Heart left ventricle (tissue), 16 donors: ENCODE measurements at regions of chr5 and their contacts with region 1.

Region 1: GRCh38 chr5:5492087-5492933 is 69.8 kb downstream of the ICE1 start:
- DNase-seq: no peak
- ATAC-seq: peak in 3 of 4 donors; percentile 49 to 62 (median 57)
- H3K4me3 ChIP-seq: no peak overlapping the region
- H3K27ac ChIP-seq: no peak overlapping the region
- H3K4me1 ChIP-seq: peaks cover 0 to 31% (median 8%) of the 10 kb centered on the region in 12 donors
- H3K27me3 ChIP-seq: peaks cover 0 to 7% (median 0%) of the 10 kb centered on the region in 9 donors
- CTCF ChIP-seq: peak; percentile 55 to 78 (median 62)
- POLR2A ChIP-seq: no peak

Region 2: DNA sequence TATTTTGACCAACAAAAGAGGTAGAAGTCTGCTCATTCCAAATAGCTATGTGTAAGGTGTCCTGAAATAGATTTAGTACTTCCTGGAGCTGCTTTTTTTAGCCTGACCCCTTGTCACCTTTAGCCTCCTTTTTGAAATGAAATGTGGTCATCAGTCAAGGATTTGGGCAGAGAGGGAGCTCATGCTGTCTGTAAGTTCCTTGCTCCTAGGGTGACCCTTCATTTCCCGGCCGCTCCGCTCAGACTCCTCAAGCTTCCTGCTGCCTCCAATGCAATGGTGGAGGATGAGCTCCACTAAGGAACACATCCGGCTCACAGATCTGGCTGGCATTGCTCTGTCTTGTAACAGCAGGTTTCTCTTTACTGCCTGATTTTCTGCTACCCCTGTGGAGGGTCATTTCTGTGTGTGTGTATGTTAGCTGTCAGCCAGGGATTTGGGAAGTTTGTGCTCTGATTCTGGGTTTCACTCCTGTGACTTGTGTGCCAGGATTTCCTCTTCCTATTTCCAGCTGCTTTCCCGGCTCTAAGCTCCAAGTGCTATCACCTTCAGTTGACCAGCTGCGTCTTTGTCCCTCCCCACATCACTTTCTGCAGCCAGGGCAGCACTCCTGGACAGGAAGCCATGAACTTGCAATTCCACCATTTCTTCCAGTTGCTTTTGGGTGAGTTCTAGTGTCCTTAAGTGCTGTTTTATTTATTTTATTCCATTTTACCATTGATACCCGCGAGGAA is 196.0 kb after region 1 on chr5:
- intact Hi-C with region 1: loop called in 1 of 10 experiments (anchors 10 kb)
- DNase-seq: peak in 4 of 5 donors; percentile 25 to 50 (median 44)
- ATAC-seq: peak; percentile 78 to 87 (median 80)
- H3K4me3 ChIP-seq: peak overlapping the region in 5 of 12 donors; percentile 16 to 45 (median 28)
- H3K27ac ChIP-seq: peak overlapping the region in 9 of 12 donors; percentile 28 to 84 (median 45)
- H3K4me1 ChIP-seq: peaks cover 0 to 39% (median 7%) of the 10 kb centered on the region in 12 donors
- H3K27me3 ChIP-seq: no peaks in the 10 kb centered on the region
- CTCF ChIP-seq: no peak
- POLR2A ChIP-seq: no peak

Region 3: GRCh38 chr5:5881294-5881693 is 389.0 kb after region 1 on chr5:
- intact Hi-C with region 1: loop called in 9 of 10 experiments (anchors 2 to 5 kb)
- DNase-seq: peak in 1 of 5 donors; percentile 23
- ATAC-seq: peak in 2 of 4 donors; percentile 32 to 53
- H3K4me3 ChIP-seq: no peak overlapping the region
- H3K27ac ChIP-seq: no peak overlapping the region
- H3K4me1 ChIP-seq: no peaks in the 10 kb centered on the region
- H3K27me3 ChIP-seq: peaks cover 0 to 5% (median 0%) of the 10 kb centered on the region in 9 donors
- CTCF ChIP-seq: peak in 5 of 12 donors; percentile 11 to 43 (median 17)
- POLR2A ChIP-seq: no peak

Region 4: GRCh38 chr5:6279607-6280006 is 787.3 kb after region 1 on chr5:
- intact Hi-C with region 1: loop called in 1 of 10 experiments (anchors 10 kb)
- DNase-seq: no peak
- ATAC-seq: no peak
- H3K4me3 ChIP-seq: no peak overlapping the region
- H3K27ac ChIP-seq: no peak overlapping the region
- H3K4me1 ChIP-seq: no peaks in the 10 kb centered on the region
- H3K27me3 ChIP-seq: no peaks in the 10 kb centered on the region
- CTCF ChIP-seq: no peak
- POLR2A ChIP-seq: no peak

Region 5: DNA sequence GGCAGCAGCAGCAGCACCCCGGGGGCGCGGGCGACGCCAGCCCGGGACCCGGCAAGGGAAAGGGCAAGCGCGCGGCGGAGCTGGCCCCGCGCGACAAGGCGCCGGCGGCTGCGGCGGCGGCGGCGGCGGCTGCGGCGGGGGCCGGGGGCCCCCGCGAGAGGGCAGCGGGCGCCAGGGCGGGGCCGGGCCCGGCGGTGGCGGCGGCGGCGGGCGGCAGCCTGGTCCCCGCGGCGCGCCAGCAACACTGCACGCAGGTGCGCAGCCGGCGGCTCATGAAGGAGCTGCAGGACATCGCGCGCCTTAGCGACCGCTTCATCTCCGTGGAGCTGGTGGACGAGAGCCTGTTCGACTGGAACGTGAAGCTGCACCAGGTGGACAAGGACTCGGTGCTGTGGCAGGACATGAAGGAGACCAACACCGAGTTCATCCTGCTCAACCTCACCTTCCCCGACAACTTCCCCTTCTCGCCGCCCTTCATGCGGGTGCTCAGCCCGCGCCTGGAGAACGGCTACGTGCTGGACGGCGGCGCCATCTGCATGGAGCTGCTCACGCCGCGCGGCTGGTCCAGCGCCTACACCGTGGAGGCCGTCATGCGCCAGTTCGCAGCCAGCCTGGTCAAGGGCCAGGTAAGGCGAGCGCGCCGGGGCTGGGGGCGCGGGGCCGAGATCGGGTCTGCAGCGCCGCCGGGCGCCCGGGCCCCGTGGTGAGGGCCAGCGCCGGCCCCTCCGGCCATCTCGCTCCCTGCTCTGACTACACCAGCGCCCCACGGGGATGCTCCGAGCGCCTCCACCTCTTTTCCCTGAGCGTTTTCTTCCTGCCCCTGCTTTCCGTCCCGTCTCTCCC is 956.5 kb after region 1 on chr5 and contains the start of gene UBE2QL1:
- intact Hi-C with region 1: loop called in 1 of 10 experiments (anchors 10 kb)
- DNase-seq: peak in 1 of 5 donors; percentile 40
- ATAC-seq: peak in 3 of 4 donors; percentile 52 to 63 (median 62)
- H3K4me3 ChIP-seq: peak within 1 kb of the TSS; percentile 39 to 76 (median 62)
- H3K27ac ChIP-seq: peak within 1 kb of the TSS in 11 of 12 donors; percentile 37 to 96 (median 80)
- H3K4me1 ChIP-seq: peaks cover 0 to 25% (median 10%) of the 10 kb centered on the region in 12 donors
- H3K27me3 ChIP-seq: peaks cover 0 to 40% (median 6%) of the 10 kb centered on the region in 9 donors
- CTCF ChIP-seq: no peak
- POLR2A ChIP-seq: no peak
- total RNA-seq, gene UBE2QL1: 9.8 to 32.0 (median 21.0) TPM

Region 6: DNA sequence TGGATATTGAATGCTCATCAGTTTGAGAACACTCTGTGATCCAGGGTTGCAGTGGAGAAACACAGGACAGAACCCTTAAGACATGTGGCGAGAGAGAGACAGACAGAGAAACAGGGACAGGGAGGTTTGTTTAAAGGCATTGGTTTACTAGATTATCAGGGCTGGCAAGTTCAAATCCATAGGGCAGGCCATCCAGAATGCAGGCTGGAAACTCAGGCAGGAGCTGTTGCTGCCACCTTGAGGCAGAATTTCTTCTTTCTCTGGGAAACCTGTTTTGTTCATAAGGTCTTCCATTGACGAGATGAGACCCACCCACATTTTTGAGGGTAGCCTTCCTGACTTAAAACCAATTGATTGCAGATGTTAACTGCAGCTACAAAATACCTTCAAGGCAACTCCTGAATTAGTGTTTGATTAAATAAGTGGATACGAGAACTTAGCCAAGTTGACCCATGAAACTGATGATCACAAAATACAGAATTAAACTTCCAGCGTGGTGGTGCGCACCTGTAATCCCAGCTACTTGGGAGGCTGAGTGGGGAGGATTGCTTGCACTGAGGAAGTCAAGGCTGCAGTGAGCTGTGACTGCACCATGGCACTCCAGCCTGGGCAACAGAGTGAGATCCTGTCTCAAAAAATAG is 1084.7 kb after region 1 on chr5:
- intact Hi-C with region 1: loop called in 9 of 10 experiments (anchors 5 to 10 kb)
- DNase-seq: no peak
- ATAC-seq: peak in 2 of 4 donors; percentile 45 to 53
- H3K4me3 ChIP-seq: no peak overlapping the region
- H3K27ac ChIP-seq: no peak overlapping the region
- H3K4me1 ChIP-seq: peaks cover 0 to 16% (median 4%) of the 10 kb centered on the region in 12 donors
- H3K27me3 ChIP-seq: peaks cover 0 to 7% (median 0%) of the 10 kb centered on the region in 9 donors
- CTCF ChIP-seq: peak; percentile 26 to 63 (median 49)
- POLR2A ChIP-seq: no peak

Region 7: DNA sequence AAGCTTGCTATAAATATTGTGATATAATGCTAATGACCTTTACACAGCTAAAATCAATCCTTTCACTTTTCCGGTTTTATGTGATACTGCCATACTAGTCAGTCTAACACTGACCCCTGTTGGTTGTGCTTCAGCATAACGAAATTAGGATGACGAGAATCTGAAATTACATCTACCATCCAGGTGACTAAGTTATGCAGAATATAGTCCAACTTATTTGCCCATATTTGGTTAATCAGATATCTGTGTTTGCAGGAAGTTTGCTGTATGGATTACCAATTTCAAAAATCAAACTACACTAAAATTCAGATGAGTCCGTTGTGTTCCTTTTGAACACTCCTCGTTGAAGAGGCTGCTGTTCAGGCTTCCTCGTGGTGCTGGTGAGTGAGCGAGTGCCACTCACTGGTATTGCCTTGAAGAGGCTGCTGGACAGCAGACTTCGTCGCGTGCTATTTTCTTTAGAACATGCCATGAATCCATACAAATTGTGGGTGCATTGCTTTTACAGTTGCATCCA is 1253.5 kb after region 1 on chr5:
- intact Hi-C with region 1: loop called in 5 of 10 experiments (anchors 10 kb)
- DNase-seq: no peak
- ATAC-seq: peak; percentile 50 to 78 (median 58)
- H3K4me3 ChIP-seq: no peak overlapping the region
- H3K27ac ChIP-seq: peak overlapping the region in 6 of 12 donors; percentile 15 to 56 (median 26)
- H3K4me1 ChIP-seq: peaks cover 0 to 14% (median 8%) of the 10 kb centered on the region in 12 donors
- H3K27me3 ChIP-seq: no peaks in the 10 kb centered on the region
- CTCF ChIP-seq: peak; percentile 61 to 86 (median 76)
- POLR2A ChIP-seq: no peak